Activated CD4-positive, alpha-beta T cell treated with anti-CD3 and anti-CD28 coated beads, Interleukin-2, amount 10 ng/mL, durations not matched to agents 7 days and 5 days (primary cell): ENCODE measurements at regions of chr1 and their contacts with region 1.

Region 1: GRCh38 chr1:58888833-58889232 is 105.0 kb upstream of the JUN start:
- DNase-seq: no peak
- H3K4me3 Mint-ChIP-seq: no peak overlapping the region
- H3K27ac Mint-ChIP-seq: no peak overlapping the region
- H3K4me1 Mint-ChIP-seq: peaks cover 29% of the 10 kb centered on the region
- H3K27me3 Mint-ChIP-seq: peaks cover 7% of the 10 kb centered on the region

Region 2: GRCh38 chr1:58738876-58739275 is 150.0 kb before region 1 on chr1:
- CTCF ChIA-PET with region 1: no interaction called
- POLR2A ChIA-PET with region 1: no interaction called
- DNase-seq: no peak
- H3K4me3 Mint-ChIP-seq: no peak overlapping the region
- H3K27ac Mint-ChIP-seq: no peak overlapping the region
- H3K4me1 Mint-ChIP-seq: peaks cover 11% of the 10 kb centered on the region
- H3K27me3 Mint-ChIP-seq: peaks cover 7% of the 10 kb centered on the region

Region 3: DNA sequence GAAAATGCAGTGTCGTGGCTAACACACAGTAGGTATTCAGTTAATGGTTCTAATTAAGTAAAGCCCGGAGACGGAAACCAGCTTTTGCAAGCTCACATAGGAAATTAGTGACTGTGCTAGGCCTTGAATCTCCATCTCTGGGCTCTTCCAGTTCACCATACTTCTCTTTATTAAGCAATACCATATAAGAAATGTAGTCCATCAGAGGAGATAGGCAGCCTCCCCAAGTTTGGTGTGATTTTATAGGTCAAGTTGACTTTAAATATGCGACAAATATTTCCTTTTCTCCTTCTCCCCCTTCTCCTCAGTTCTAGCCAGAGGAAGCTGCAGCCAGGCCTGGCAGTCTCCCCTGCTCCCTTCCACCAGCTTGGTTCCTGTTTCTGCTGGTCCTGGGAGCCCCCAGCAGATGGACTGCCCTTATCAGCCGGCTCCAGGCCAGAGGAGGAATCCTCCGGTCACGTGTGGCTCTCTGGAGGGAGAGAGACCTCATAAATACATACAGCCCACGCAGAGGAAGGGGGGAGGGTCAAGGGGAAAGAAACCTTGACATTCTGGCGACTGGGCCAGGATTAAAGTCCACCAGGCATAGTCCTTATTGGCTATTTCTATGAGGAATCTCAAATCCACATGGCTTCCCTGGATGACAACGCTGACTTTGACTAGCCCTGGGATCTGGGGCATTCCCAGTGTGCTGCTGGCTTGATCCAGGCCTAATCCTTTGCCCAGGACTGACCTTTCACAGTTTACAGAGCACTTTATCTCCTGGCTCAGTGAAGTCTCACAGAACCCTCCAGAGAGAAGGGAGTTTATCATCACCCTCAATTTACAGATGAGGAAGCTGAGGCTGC is 10.1 kb after region 1 on chr1:
- CTCF ChIA-PET with region 1: interaction called, 18 read pairs
- POLR2A ChIA-PET with region 1: no interaction called
- DNase-seq: no peak
- H3K4me3 Mint-ChIP-seq: no peak overlapping the region
- H3K27ac Mint-ChIP-seq: no peak overlapping the region
- H3K4me1 Mint-ChIP-seq: peaks cover 26% of the 10 kb centered on the region
- H3K27me3 Mint-ChIP-seq: no peaks in the 10 kb centered on the region

Region 4: DNA sequence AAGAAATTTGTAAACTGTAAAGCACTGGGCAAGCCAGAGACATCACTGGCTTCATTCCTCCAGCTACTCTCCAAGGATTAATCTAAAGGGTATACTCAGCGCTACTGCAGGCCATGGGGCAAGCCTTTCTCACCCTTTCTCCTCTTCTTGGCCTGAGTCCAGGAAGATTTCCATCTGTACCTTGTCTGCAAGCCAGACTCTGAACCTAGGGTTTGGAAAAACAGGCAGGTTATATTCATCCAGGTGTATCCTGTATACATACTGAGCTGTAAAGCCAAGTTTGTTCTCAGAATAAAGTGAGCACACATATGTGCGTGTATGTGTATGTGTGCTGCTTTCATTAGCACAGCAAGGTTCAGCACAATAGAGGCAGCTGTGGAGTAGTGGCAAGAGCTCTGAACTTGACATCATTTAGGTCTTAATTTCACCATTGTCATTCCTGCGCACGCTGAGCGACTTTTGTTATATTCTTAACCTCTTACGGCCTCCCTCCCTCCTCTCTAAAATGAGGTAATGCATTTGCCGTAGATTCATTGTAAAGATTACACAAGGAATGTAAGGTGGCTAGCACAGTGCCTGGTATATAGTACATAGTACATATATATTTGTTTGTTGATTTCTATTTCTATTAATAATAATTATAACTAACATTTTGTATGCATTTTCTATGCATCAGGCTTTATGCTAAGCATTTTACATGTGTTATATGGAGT is 23.2 kb after region 1 on chr1:
- CTCF ChIA-PET with region 1: no interaction called
- POLR2A ChIA-PET with region 1: no interaction called
- DNase-seq: no peak
- H3K4me3 Mint-ChIP-seq: no peak overlapping the region
- H3K27ac Mint-ChIP-seq: no peak overlapping the region
- H3K4me1 Mint-ChIP-seq: no peaks in the 10 kb centered on the region
- H3K27me3 Mint-ChIP-seq: peaks cover 21% of the 10 kb centered on the region